ENCODE measurements at regions of chr16 and their contacts with region 1.

Region 1: GRCh38 chr16:56191156-56191815 is at the start of gene GNAO1:
- DNase-seq: peak; percentile 50 to 89 (median 75)
- H3K4me3 ChIP-seq: peak within 1 kb of the TSS; percentile 63 to 97 (median 82)
- H3K27ac ChIP-seq: peak within 1 kb of the TSS; percentile 92 to 99 (median 98)
- H3K27me3 ChIP-seq: no peaks in the 10 kb centered on the region
- CTCF ChIP-seq: peak in 10 of 56 donors; percentile 8 to 23 (median 12)
- total RNA-seq, gene GNAO1: 319 to 543 (median 428) TPM

Region 2: DNA sequence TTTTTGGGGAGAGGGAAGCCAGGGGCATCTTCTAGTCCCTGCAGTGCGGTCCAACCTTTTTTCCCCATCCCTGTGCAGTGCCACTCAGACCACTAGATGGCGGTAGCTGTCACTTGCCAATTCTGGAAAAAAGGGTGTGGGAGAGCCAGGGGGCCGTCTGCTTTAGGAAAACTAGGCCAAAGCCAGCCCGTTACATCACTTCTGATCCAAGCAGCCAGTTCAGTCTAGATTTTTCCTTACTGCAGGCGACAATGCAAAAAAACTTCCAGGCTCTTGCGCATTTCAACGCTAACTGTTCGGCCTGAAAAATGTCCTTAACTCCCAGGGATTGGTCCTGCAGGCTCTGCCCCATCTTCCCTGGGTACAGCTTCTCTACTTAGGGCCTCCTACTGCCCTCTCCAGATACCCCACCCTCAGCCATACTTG is 246.9 kb before region 1 on chr16:
- intact Hi-C with region 1: loop called in 1 of 2 experiments (anchors 2 kb)
- DNase-seq: peak; percentile 57 to 87 (median 78)
- H3K4me3 ChIP-seq: no peak overlapping the region
- H3K27ac ChIP-seq: peak overlapping the region in 56 of 59 donors; percentile 24 to 94 (median 81)
- H3K27me3 ChIP-seq: no peaks in the 10 kb centered on the region
- CTCF ChIP-seq: peak; percentile 91 to 99 (median 98)

Region 3: GRCh38 chr16:56041686-56042085 is 149.6 kb before region 1 on chr16:
- intact Hi-C with region 1: loop called in 1 of 2 experiments (anchors 5 kb)
- DNase-seq: peak in 3 of 10 donors; percentile 20 to 60 (median 30)
- H3K4me3 ChIP-seq: no peak overlapping the region
- H3K27ac ChIP-seq: no peak overlapping the region
- H3K27me3 ChIP-seq: no peaks in the 10 kb centered on the region
- CTCF ChIP-seq: peak in 49 of 56 donors; percentile 12 to 63 (median 39)

Region 4: GRCh38 chr16:56108056-56108471 is 83.2 kb before region 1 on chr16:
- intact Hi-C with region 1: loop called (anchors 2 kb)
- DNase-seq: peak; percentile 21 to 75 (median 54)
- H3K4me3 ChIP-seq: peak overlapping the region in 17 of 59 donors; percentile 2 to 47 (median 23)
- H3K27ac ChIP-seq: peak overlapping the region in 56 of 59 donors; percentile 8 to 88 (median 72)
- H3K27me3 ChIP-seq: no peaks in the 10 kb centered on the region
- CTCF ChIP-seq: peak in 2 of 56 donors; percentile 7 to 33

Region 5: GRCh38 chr16:56237451-56237930 is 46.2 kb after region 1 on chr16:
- intact Hi-C with region 1: loop called (anchors 5 kb)
- DNase-seq: no peak
- H3K4me3 ChIP-seq: peak overlapping the region in 36 of 59 donors; percentile 0 to 53 (median 24)
- H3K27ac ChIP-seq: peak overlapping the region; percentile 22 to 100 (median 90)
- H3K27me3 ChIP-seq: no peaks in the 10 kb centered on the region
- CTCF ChIP-seq: peak in 2 of 56 donors; percentile 4 to 7

Region 6: DNA sequence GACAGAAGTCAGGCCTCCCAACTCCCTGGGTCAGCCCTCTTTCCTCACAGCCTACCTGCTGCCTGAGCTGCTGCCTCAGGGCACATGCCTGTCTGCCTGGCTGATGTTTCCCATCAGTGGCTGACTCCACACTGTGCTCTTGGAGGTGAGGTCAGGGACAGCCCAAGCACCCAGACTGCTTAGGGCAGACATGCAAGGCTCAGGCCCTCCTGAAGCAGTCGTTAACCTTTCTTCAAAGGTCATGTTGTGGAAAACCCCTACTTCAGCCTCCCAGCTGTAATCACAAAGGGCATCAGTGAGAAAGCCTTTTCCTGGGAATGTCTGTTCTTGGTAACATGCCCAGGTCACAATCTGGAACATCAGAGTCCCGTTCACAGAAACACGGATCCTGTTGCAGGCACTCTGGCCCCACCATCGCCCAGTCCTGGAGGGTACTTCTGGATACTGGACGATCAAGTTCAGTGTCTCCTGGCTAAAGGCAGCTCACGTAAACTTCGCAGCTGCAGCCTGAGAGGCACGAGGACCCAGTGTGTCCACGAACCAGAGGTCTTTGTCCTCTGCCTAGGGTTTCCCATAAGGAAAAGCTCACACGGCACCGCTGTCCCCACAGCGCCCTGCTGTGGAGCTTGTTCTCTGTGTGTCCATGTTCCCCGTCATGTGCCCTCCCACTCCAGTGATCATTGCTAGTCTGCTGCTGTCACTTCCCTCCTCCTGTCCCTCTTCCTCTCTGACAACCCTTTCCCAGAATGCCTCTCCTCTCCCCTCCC is 54.9 kb after region 1 on chr16:
- intact Hi-C with region 1: loop called in 1 of 2 experiments (anchors 5 kb)
- DNase-seq: peak in 9 of 10 donors; percentile 71 to 92 (median 85)
- H3K4me3 ChIP-seq: peak overlapping the region in 1 of 59 donors; percentile 12
- H3K27ac ChIP-seq: peak overlapping the region; percentile 66 to 100 (median 93)
- H3K27me3 ChIP-seq: no peaks in the 10 kb centered on the region
- CTCF ChIP-seq: peak in 50 of 56 donors; percentile 20 to 73 (median 51)